Right cardiac atrium (tissue), 5 donors: ENCODE measurements at regions of chr7 and their contacts with region 1.

Region 1: GRCh38 chr7:51366930-51367613 is 50.5 kb upstream of the COBL start:
- DNase-seq: no peak
- ATAC-seq: peak; percentile 83 to 85
- H3K4me3 ChIP-seq: no peak overlapping the region
- H3K27ac ChIP-seq: no peak overlapping the region
- H3K4me1 ChIP-seq: no peaks in the 10 kb centered on the region
- H3K27me3 ChIP-seq: no peaks in the 10 kb centered on the region

Region 2: GRCh38 chr7:50092579-50093491 is 1274.2 kb before region 1 on chr7 and contains the start of gene ZPBP:
- intact Hi-C with region 1: loop called in 1 of 4 experiments (anchors 10 kb)
- DNase-seq: peak; percentile 13 to 65 (median 57)
- ATAC-seq: peak; percentile 55 to 56
- H3K4me3 ChIP-seq: peak within 1 kb of the TSS; percentile 2
- H3K27ac ChIP-seq: no peak within 1 kb of the TSS
- H3K4me1 ChIP-seq: no peaks in the 10 kb centered on the region
- H3K27me3 ChIP-seq: no peaks in the 10 kb centered on the region
- total RNA-seq, gene ZPBP: not detected

Region 3: DNA sequence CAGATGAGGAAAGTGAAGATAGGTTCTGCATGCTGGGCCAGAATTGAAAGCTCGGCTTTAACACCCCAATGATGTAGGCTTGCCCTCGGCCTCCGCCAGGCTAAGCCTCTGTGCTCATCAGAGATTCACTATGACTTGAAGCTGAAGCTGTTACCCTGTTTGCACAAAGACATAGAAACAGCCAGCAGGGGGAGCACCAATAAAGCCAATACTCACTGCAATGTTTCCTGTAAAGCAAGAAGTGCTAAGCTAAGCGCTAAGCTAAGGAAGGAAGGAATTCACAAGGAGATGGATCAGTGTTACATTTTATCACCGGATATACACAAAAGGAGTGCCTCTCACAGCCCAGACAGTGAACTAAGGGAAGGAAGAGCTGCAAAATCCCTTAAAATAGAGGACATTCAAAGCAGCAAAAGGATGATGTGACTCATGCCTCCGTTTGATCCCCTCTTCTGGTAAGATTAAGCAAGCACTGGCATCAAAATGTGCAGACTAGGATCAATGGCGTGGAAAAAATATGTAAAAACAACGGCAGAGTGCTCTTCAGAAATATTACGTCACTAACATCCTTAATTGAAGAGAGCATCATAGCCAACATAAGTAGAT is 204.2 kb before region 1 on chr7:
- intact Hi-C with region 1: loop called (anchors 2 to 10 kb)
- DNase-seq: peak; percentile 56 to 61 (median 60)
- ATAC-seq: peak; percentile 87 to 90
- H3K4me3 ChIP-seq: no peak overlapping the region
- H3K27ac ChIP-seq: no peak overlapping the region
- H3K4me1 ChIP-seq: no peaks in the 10 kb centered on the region
- H3K27me3 ChIP-seq: no peaks in the 10 kb centered on the region

Region 4: GRCh38 chr7:51253161-51253560 is 113.9 kb before region 1 on chr7:
- intact Hi-C with region 1: loop called in 1 of 4 experiments (anchors 5 kb)
- DNase-seq: no peak
- ATAC-seq: no peak
- H3K4me3 ChIP-seq: no peak overlapping the region
- H3K27ac ChIP-seq: no peak overlapping the region
- H3K4me1 ChIP-seq: peaks cover 11% of the 10 kb centered on the region
- H3K27me3 ChIP-seq: no peaks in the 10 kb centered on the region